ENCODE measurements at regions of chr18 and their contacts with region 1.

Region 1: GRCh38 chr18:54802686-54803395 is 25.4 kb upstream of the RAB27B start:
- DNase-seq: no peak
- H3K4me3 ChIP-seq: no peak overlapping the region
- H3K27ac ChIP-seq: no peak overlapping the region
- H3K4me1 ChIP-seq: no peaks in the 10 kb centered on the region
- H3K27me3 ChIP-seq: no peaks in the 10 kb centered on the region
- CTCF ChIP-seq: no peak
- EP300 ChIP-seq: no peak
- POLR2A ChIP-seq: no peak

Region 2: GRCh38 chr18:54843314-54843713 is 40.5 kb after region 1 on chr18:
- intact Hi-C with region 1: loop called in 1 of 4 experiments (anchors 1 kb)
- DNase-seq: no peak
- H3K4me3 ChIP-seq: no peak overlapping the region
- H3K27ac ChIP-seq: no peak overlapping the region
- H3K4me1 ChIP-seq: no peaks in the 10 kb centered on the region
- H3K27me3 ChIP-seq: no peaks in the 10 kb centered on the region
- CTCF ChIP-seq: no peak
- EP300 ChIP-seq: no peak
- POLR2A ChIP-seq: no peak

Region 3: GRCh38 chr18:54880395-54881095 is 77.7 kb after region 1 on chr18:
- intact Hi-C with region 1: no loop called
- DNase-seq: no peak
- H3K4me3 ChIP-seq: no peak overlapping the region
- H3K27ac ChIP-seq: no peak overlapping the region
- H3K4me1 ChIP-seq: no peaks in the 10 kb centered on the region
- H3K27me3 ChIP-seq: no peaks in the 10 kb centered on the region
- CTCF ChIP-seq: no peak
- EP300 ChIP-seq: no peak
- POLR2A ChIP-seq: no peak